ENCODE measurements at regions of chr1 and their contacts with region 1.

Region 1: DNA sequence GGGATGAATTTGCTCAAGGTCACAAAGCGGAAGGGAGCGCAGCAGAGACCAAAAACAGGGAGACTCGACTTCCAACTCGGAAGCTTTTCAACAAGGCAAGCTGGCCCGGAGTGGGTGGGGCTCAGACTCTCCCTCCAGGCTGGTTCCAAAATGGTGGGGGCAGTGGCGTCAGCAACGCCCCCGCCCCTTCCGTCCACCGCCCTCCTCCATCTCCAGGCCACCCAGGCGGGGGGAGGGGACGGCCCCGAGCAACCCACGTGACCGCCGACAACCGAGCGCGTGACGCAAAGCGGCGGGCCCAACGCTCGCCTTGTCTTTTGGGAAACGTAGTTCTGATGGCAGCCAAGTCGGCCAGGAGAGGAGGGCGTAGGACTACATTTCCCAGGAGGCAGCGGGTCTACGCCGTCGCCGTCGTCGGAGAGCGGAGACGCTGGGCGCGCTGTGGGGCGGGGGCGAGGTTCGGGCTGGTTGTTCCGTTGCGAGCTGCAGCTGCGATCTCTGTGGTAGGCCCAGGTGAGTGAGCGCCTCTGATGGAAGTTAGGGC is at the start of gene THRAP3:
- DNase-seq: peak; percentile 96 to 100 (median 100)
- ATAC-seq: peak; percentile 92
- H3K4me3 ChIP-seq: peak within 1 kb of the TSS; percentile 69
- H3K4me3 Mint-ChIP-seq: peak within 1 kb of the TSS; percentile 96 to 99 (median 98)
- H3K27ac ChIP-seq: peak within 1 kb of the TSS; percentile 98
- H3K27ac Mint-ChIP-seq: peak within 1 kb of the TSS; percentile 96 to 100 (median 100)
- H3K4me1 ChIP-seq: peaks cover 27 to 29% of the 10 kb centered on the region in 2 donors
- H3K4me1 Mint-ChIP-seq: peaks cover 21 to 43% (median 35%) of the 10 kb centered on the region in 7 donors
- H3K27me3 ChIP-seq: no peaks in the 10 kb centered on the region
- H3K27me3 Mint-ChIP-seq: no peaks in the 10 kb centered on the region
- total RNA-seq, gene THRAP3: 62.1 to 138 (median 122) TPM

Region 2: DNA sequence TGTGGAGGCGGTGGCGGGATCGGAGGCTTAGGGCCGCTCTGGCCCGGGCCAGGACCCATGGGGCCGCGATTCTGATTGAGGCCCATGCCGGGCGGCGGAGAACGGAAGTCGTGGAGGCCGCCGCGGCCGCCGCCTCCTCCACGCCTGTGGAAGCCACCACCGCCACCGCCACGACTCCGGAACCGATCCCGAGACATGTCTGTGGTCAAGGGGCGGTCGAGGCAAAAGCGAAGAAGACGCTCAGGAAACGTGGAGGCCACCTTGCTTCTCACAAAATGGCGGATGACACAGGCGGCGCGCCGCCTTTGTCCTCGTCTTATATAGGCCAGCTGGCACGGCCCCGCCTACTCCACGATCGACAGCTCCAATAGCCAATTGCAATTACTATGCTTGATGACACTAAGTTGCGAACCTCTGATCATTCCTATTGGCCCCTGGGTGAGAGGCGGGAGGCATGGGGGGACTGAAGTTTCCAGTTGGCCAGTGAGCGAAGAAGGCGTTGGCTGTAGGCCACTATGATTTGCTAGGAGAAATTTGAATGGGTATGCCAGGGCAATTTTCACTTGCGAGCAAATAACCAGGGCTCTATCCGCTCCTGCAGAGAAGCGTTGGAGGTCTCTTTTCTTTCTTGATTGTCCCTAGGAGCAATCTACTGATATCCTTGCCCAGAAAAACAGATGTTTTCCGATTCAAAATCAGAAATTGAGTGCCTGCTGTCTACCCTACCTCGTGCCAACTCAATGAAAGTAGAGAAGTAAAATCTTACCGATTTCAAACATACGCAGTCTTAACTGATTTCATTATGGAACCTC is 1031.0 kb before region 1 on chr1 and contains the start of gene SFPQ:
- CTCF ChIA-PET with region 1: no interaction called
- POLR2A ChIA-PET with region 1: no interaction called
- intact Hi-C with region 1: loop called in 1 of 2 experiments (anchors 5 kb)
- DNase-seq: peak; percentile 94 to 99 (median 98)
- ATAC-seq: peak; percentile 94
- H3K4me3 ChIP-seq: peak within 1 kb of the TSS; percentile 72
- H3K4me3 Mint-ChIP-seq: peak within 1 kb of the TSS; percentile 92 to 98 (median 96)
- H3K27ac ChIP-seq: peak within 1 kb of the TSS; percentile 99
- H3K27ac Mint-ChIP-seq: peak within 1 kb of the TSS; percentile 92 to 99 (median 98)
- H3K4me1 ChIP-seq: peaks cover 31 to 32% of the 10 kb centered on the region in 2 donors
- H3K4me1 Mint-ChIP-seq: peaks cover 34 to 52% (median 47%) of the 10 kb centered on the region in 7 donors
- H3K27me3 ChIP-seq: no peaks in the 10 kb centered on the region
- H3K27me3 Mint-ChIP-seq: peaks cover 0 to 5% (median 0%) of the 10 kb centered on the region in 5 donors
- total RNA-seq, gene SFPQ: 316 to 610 (median 356) TPM

Region 3: DNA sequence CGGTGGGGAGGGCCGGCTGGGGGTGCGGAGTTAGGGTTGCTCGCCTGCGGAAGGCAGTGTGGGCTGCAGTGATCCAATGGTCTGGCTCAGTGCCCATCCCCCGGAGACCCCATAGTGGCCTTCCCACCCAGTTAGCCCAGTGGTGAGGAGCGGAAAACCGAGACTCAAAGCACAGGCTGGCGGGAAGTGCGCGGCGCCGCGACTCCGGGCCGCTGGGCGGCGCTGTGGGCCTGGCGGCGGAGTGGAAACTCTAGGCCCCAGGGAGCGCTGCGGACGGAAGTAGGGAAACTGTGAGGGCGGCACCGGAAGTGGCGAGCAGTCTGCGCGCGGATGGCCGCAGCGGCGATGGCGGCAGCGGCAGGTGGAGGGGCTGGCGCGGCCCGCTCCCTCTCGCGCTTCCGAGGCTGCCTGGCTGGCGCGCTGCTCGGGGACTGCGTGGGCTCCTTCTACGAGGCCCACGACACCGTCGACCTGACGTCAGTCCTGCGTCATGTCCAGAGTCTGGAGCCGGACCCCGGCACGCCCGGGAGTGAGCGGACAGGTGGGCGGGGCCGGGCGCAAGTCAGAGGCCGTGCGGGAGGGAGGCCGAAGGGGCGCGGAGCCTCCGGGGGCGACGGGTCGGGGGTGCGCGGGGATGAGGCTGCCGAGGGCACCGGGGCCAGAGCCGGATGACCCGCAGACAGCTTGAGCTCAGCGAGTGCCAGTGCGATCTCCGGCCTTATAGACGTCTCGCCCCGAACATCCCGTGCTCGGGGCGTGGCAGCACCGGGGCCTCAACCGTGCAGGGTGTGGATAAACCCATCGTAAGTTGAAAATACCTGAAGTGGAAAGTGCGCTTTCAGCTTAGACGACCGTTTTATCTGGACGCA is 135.3 kb before region 1 on chr1 and contains the start of gene ADPRS:
- CTCF ChIA-PET with region 1: no interaction called
- POLR2A ChIA-PET with region 1: interaction called, 4 read pairs
- intact Hi-C with region 1: loop called (anchors 1 kb)
- DNase-seq: peak; percentile 81 to 95 (median 88)
- ATAC-seq: peak; percentile 98
- H3K4me3 ChIP-seq: peak within 1 kb of the TSS; percentile 47
- H3K4me3 Mint-ChIP-seq: peak within 1 kb of the TSS; percentile 83 to 96 (median 93)
- H3K27ac ChIP-seq: peak within 1 kb of the TSS; percentile 98
- H3K27ac Mint-ChIP-seq: peak within 1 kb of the TSS; percentile 86 to 97 (median 90)
- H3K4me1 ChIP-seq: peaks cover 11 to 16% of the 10 kb centered on the region in 2 donors
- H3K4me1 Mint-ChIP-seq: peaks cover 12 to 30% (median 23%) of the 10 kb centered on the region in 7 donors
- H3K27me3 ChIP-seq: peaks cover 0 to 5% of the 10 kb centered on the region in 2 donors
- H3K27me3 Mint-ChIP-seq: peaks cover 10 to 18% (median 10%) of the 10 kb centered on the region in 5 donors
- total RNA-seq, gene ADPRS: 18.0 to 30.2 (median 24.2) TPM

Region 4: DNA sequence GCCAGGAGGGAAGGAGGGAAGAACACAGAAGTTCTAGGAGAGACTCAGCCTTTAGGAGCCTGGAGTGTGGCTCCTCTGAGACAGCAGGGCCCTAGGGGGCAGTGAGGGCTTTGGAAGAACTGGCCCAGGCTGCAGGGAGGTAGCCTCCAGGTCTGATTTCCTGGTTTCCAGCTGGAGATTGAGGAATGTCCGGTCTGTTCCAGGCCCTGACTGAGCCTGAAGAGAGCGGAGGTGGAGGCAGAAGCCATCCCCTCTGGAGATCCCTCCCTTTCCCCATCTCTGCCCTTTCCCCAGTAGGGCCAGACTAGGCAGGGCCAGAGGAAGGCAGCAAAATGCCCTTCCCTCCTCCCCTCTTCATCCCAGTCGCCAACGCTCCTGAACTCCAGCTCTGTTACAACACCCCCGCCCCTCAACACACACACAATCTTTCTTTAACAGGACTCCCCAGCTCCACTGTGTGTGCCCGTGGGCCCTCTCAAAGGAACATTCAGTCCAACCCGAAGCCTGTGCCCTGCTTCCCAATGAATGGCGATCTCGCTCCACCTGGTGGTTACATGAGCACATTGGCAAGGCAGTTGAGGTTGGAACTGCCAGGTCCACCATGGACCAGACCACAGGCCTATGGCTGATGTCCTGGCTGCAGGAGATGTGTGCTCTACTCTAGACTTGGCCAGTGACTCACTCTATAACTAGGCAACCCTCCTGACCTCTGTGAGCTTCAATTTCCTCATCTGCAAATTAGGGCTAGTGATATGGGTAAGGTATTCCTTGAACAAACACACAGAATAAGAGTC is 36.1 kb before region 1 on chr1:
- CTCF ChIA-PET with region 1: interaction called, 11 read pairs
- POLR2A ChIA-PET with region 1: interaction called, 14 read pairs
- intact Hi-C with region 1: loop called in 1 of 2 experiments (anchors 1 kb)
- DNase-seq: peak; percentile 56 to 86 (median 80)
- ATAC-seq: peak; percentile 99
- H3K4me3 ChIP-seq: no peak overlapping the region
- H3K4me3 Mint-ChIP-seq: no peak overlapping the region
- H3K27ac ChIP-seq: no peak overlapping the region
- H3K27ac Mint-ChIP-seq: peak overlapping the region; percentile 37 to 85 (median 73)
- H3K4me1 ChIP-seq: no peaks in the 10 kb centered on the region
- H3K4me1 Mint-ChIP-seq: peaks cover 0 to 16% (median 12%) of the 10 kb centered on the region in 7 donors
- H3K27me3 ChIP-seq: no peaks in the 10 kb centered on the region
- H3K27me3 Mint-ChIP-seq: no peaks in the 10 kb centered on the region

Region 5: GRCh38 chr1:36306902-36307456 is 82.9 kb after region 1 on chr1:
- CTCF ChIA-PET with region 1: no interaction called
- POLR2A ChIA-PET with region 1: interaction called, 15 read pairs
- intact Hi-C with region 1: loop called (anchors 1 kb)
- DNase-seq: peak; percentile 90 to 96 (median 93)
- ATAC-seq: peak; percentile 99
- H3K4me3 ChIP-seq: peak overlapping the region; percentile 87
- H3K4me3 Mint-ChIP-seq: peak overlapping the region; percentile 87 to 98 (median 96)
- H3K27ac ChIP-seq: peak overlapping the region; percentile 81
- H3K27ac Mint-ChIP-seq: peak overlapping the region; percentile 70 to 97 (median 87)
- H3K4me1 ChIP-seq: peaks cover 0 to 6% of the 10 kb centered on the region in 2 donors
- H3K4me1 Mint-ChIP-seq: peaks cover 6 to 39% (median 13%) of the 10 kb centered on the region in 7 donors
- H3K27me3 ChIP-seq: no peaks in the 10 kb centered on the region
- H3K27me3 Mint-ChIP-seq: no peaks in the 10 kb centered on the region

Region 6: GRCh38 chr1:36463803-36464604 is 239.9 kb after region 1 on chr1 and contains the start of gene MRPS15:
- CTCF ChIA-PET with region 1: no interaction called
- POLR2A ChIA-PET with region 1: interaction called, 10 read pairs
- intact Hi-C with region 1: loop called in 1 of 2 experiments (anchors 5 kb)
- DNase-seq: peak; percentile 85 to 95 (median 93)
- ATAC-seq: peak; percentile 99
- H3K4me3 ChIP-seq: peak within 1 kb of the TSS; percentile 85
- H3K4me3 Mint-ChIP-seq: peak within 1 kb of the TSS; percentile 86 to 100 (median 97)
- H3K27ac ChIP-seq: peak within 1 kb of the TSS; percentile 91
- H3K27ac Mint-ChIP-seq: peak within 1 kb of the TSS; percentile 90 to 99 (median 98)
- H3K4me1 ChIP-seq: peaks cover 7 to 13% of the 10 kb centered on the region in 2 donors
- H3K4me1 Mint-ChIP-seq: peaks cover 18 to 54% (median 43%) of the 10 kb centered on the region in 7 donors
- H3K27me3 ChIP-seq: no peaks in the 10 kb centered on the region
- H3K27me3 Mint-ChIP-seq: no peaks in the 10 kb centered on the region
- total RNA-seq, gene MRPS15: 30.2 to 84.0 (median 36.3) TPM

Region 7: GRCh38 chr1:36528361-36529349 is 304.6 kb after region 1 on chr1:
- CTCF ChIA-PET with region 1: no interaction called
- POLR2A ChIA-PET with region 1: no interaction called
- intact Hi-C with region 1: no loop called
- DNase-seq: no peak
- ATAC-seq: no peak
- H3K4me3 ChIP-seq: no peak overlapping the region
- H3K4me3 Mint-ChIP-seq: no peak overlapping the region
- H3K27ac ChIP-seq: no peak overlapping the region
- H3K27ac Mint-ChIP-seq: no peak overlapping the region
- H3K4me1 ChIP-seq: no peaks in the 10 kb centered on the region
- H3K4me1 Mint-ChIP-seq: no peaks in the 10 kb centered on the region
- H3K27me3 ChIP-seq: no peaks in the 10 kb centered on the region
- H3K27me3 Mint-ChIP-seq: peaks cover 0 to 13% (median 4%) of the 10 kb centered on the region in 5 donors